ENCODE measurements at regions of chr1 and their contacts with region 1.

Region 1: GRCh38 chr1:154747740-154748404 is 122.2 kb downstream of the KCNN3 start:
- DNase-seq: peak; percentile 22 to 70 (median 54)
- ATAC-seq: peak; percentile 88
- H3K4me3 ChIP-seq: peak overlapping the region; percentile 24
- H3K4me3 Mint-ChIP-seq: peak overlapping the region; percentile 83
- H3K27ac ChIP-seq: peak overlapping the region; percentile 50 to 61
- H3K27ac Mint-ChIP-seq: peak overlapping the region; percentile 93
- H3K4me1 ChIP-seq: peaks cover 48% of the 10 kb centered on the region
- H3K4me1 Mint-ChIP-seq: peaks cover 54% of the 10 kb centered on the region
- H3K27me3 ChIP-seq: no peaks in the 10 kb centered on the region
- H3K27me3 Mint-ChIP-seq: no peaks in the 10 kb centered on the region
- CTCF ChIP-seq: no peak

Region 2: DNA sequence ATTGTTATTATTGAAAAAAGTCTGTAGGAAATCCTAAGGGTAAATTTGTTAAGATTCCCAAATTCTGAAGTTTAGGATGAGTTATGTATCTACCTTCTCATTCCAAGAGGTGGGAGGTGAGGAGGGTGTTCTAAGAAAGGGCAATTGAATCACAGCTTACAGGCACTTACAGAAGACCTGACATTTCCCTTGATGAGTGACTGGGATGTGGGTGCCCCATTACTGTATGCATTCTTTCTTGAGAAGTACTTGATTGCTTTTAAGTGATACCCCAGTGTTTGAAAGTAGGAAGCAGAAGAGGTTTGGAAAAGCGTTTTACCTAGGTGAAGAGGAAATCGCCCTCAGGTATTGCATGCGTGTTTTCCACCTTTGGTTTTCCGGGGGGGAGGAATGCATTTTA is 52.9 kb before region 1 on chr1:
- CTCF ChIA-PET with region 1: no interaction called
- POLR2A ChIA-PET with region 1: no interaction called
- intact Hi-C with region 1: loop called in 1 of 2 experiments (anchors 5 kb)
- DNase-seq: no peak
- ATAC-seq: no peak
- H3K4me3 ChIP-seq: no peak overlapping the region
- H3K4me3 Mint-ChIP-seq: no peak overlapping the region
- H3K27ac ChIP-seq: no peak overlapping the region
- H3K27ac Mint-ChIP-seq: no peak overlapping the region
- H3K4me1 ChIP-seq: no peaks in the 10 kb centered on the region
- H3K4me1 Mint-ChIP-seq: no peaks in the 10 kb centered on the region
- H3K27me3 ChIP-seq: peaks cover 0 to 5% of the 10 kb centered on the region in 2 experiments
- H3K27me3 Mint-ChIP-seq: peaks cover 5% of the 10 kb centered on the region
- CTCF ChIP-seq: no peak

Region 3: DNA sequence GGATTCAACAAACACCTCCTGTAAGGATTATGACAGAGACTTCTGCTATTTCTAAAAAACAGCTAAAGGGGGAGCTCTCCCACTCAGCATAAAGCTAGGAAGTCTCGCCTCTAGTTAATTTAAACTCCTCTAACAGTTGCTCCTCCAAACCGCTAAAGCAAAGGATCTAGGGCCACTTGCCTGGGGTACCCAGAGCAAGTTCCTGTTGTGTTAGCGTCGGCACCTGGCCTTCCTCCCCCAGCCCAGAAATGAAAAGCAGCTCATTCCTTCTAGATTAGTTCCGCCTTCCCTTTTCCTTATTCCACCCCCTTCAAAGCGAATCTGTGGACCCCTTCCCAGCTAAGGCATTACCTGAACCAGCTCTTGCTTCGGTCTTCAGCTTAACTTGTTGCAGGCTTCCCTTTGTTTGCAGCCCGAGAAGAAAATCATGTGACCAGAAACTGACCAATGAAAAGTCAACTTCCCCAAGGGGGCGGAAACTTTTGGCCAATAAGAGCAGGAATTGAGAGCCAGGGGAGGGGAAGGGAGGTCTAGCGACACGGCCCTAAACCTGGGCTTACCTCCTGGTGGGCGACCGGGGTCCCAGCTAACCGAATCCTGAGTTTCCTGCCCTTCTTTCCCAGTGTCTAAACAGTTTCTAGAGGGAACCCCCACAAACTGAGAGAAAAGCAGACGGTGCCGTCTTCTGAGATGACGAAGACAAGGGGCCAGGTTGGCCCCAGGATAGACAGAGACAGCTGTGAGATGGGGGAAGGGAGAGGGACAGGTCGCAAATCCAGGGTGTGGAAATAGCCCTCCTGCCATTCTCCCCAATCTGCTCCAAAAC is 208.1 kb after region 1 on chr1 and contains the start of gene PBXIP1:
- CTCF ChIA-PET with region 1: no interaction called
- POLR2A ChIA-PET with region 1: no interaction called
- intact Hi-C with region 1: no loop called
- DNase-seq: peak; percentile 64 to 95 (median 78)
- ATAC-seq: peak; percentile 40
- H3K4me3 ChIP-seq: peak within 1 kb of the TSS; percentile 69
- H3K4me3 Mint-ChIP-seq: peak within 1 kb of the TSS; percentile 95
- H3K27ac ChIP-seq: peak within 1 kb of the TSS; percentile 100
- H3K27ac Mint-ChIP-seq: peak within 1 kb of the TSS; percentile 96
- H3K4me1 ChIP-seq: peaks cover 96% of the 10 kb centered on the region
- H3K4me1 Mint-ChIP-seq: peaks cover 57% of the 10 kb centered on the region
- H3K27me3 ChIP-seq: no peaks in the 10 kb centered on the region
- H3K27me3 Mint-ChIP-seq: no peaks in the 10 kb centered on the region
- CTCF ChIP-seq: peak; percentile 40
- total RNA-seq, gene PBXIP1: 434 to 440 TPM

Measured in CD4-positive, alpha-beta T cell (primary cell).